Spleen (tissue), 13 donors: ENCODE measurements at regions of chr17 and their contacts with region 1.

Region 1: DNA sequence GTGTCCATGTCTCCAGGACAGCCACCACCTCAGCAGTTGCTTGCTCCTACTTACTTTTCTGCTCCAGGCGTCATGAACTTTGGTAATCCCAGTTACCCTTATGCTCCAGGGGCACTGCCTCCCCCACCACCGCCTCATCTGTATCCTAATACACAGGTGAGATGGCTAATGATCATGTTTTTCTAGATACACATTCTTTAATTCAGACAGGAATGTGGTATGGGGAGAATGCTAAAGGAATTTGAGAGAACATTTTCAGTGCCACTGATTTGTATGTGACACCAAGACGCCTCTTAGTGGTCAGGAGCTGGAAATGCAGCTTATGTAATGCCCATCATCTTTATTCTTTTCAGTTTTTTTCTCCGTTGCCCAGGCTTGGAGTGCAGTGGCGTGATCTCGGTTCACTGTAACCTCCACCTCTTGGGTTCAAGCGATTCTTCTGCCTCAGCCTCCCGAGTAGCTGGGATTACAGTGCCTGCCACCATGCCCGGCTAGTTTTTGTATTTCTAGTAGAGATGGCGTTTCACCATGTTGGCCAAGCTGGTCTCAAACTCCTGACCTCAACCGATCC is 8.9 kb upstream of the RAPGEFL1 start:
- DNase-seq: no peak
- H3K4me3 ChIP-seq: no peak overlapping the region
- H3K27ac ChIP-seq: peak overlapping the region in 5 of 8 donors; percentile 27 to 50 (median 40)
- H3K4me1 ChIP-seq: peaks cover 0 to 23% (median 5%) of the 10 kb centered on the region in 6 donors
- H3K27me3 ChIP-seq: no peaks in the 10 kb centered on the region
- CTCF ChIP-seq: peak; percentile 77 to 94 (median 88)
- POLR2A ChIP-seq: no peak

Region 2: GRCh38 chr17:40038882-40039513 is 129.3 kb before region 1 on chr17:
- intact Hi-C with region 1: loop called (anchors 10 kb)
- DNase-seq: peak; percentile 41
- H3K4me3 ChIP-seq: no peak overlapping the region
- H3K27ac ChIP-seq: peak overlapping the region in 4 of 8 donors; percentile 8 to 47 (median 46)
- H3K4me1 ChIP-seq: peaks cover 0 to 12% (median 4%) of the 10 kb centered on the region in 6 donors
- H3K27me3 ChIP-seq: no peaks in the 10 kb centered on the region
- CTCF ChIP-seq: peak in 8 of 11 experiments; percentile 30 to 65 (median 56)
- POLR2A ChIP-seq: no peak